ENCODE measurements at regions of chr9 and their contacts with region 1.

Region 1: DNA sequence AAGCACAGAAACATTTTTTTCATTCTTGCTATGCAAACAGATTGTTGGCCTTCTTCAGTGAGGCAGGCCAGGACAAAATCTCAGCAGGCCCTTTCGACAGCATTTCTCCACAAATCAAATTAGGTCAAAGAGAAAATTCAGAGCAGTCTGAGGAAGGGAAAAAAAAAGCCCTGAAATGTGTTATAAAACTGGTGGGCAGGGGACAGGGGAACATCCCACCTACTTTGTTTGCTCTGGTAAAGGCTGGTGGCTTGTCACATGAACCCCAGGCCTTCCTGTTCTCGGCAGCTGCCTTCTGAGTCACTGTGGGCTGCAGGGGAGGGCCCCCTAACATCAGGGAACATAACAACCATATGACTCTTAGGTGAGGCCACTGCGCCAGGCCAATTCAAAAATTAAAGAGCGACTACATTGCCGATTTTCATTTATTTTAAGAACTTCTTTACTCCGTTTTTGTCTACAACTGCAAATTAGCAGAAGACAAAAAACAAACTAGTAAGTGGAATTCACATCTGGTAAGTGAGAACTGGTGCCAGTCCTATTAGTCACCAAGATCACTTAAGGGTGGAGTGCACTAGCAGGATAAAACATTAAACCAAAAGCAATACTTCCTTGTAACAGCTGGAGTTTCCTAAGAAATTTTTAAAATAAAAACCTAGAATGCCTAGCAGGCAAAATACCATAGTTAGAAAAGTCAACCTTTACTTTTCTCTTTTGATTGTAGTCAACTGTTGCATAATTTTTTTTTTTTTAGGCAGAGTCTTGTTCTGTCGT is 46.2 kb upstream of the DENND4C start:
- DNase-seq: peak; percentile 77
- ATAC-seq: peak; percentile 90

Region 2: GRCh38 chr9:18976709-18977531 is 207.4 kb before region 1 on chr9:
- intact Hi-C with region 1: no loop called
- DNase-seq: no peak
- ATAC-seq: no peak

Region 3: DNA sequence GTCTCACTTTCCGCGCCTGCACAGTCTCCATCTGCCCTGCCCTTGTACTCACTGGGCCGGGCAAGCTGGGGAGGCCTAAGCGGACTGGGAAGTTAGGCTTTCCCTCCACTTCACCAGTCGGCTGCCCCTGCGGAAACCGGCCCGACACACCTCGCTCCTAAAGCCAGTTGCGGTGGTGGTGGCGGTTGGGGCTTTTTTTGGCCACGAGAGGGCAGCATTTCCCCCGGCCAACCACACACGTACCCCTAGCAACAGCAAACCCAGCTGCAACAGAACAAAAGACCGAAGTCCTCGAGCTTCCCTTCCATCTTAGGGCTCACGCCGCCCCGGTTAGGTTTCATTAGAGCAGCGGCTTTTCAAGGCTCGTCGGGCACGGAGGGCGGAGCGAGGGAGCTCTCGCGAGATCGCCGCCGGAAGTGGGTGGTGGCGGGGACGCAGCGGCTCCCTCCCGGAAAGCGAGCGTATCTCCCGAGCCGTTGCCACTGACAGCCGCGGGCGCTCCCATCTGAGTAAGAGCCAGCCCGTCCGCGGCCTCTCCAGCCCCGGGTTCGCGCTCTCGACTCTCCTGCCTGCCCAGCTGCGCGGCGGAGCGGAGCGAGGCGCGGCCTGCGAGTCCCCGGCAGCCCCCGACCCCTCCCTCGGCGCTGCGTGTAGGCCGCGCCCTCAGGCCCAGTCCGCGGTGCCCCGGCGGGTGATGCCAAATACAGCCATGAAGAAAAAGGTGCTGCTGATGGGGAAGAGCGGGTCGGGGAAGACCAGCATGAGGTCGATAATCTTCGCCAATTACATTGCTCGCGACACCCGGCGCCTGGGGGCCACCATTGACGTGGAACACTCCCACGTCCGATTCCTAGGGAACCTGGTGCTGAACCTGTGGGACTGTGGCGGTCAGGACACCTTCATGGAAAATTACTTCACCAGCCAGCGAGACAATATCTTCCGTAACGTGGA is 135.1 kb before region 1 on chr9 and contains the start of gene RRAGA:
- intact Hi-C with region 1: loop called (anchors 5 kb)
- DNase-seq: peak; percentile 97
- ATAC-seq: peak; percentile 97
- total RNA-seq, gene RRAGA: 76.9 TPM

Region 4: DNA sequence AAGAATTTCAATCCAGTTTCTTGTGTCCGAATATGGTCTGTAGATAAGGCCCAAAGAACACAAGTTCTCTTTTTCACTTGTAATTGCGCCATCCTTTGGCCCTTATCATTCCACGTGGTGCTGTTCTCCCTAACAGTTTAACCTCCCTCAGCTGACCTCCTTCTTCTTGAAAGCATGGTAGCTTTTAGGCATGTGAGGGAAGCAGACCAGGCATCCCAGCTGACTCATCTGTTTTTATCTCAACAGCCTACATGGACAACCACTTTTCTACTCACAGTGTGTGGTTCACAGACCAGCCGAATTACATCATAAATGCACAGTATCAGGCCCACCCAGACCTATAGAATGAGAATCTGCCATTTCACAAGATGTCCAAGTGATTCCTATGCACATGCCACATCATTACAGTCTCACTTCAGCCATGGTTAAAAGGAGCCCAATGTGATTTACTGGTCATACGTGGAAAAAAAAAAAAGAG is 30.2 kb before region 1 on chr9:
- intact Hi-C with region 1: no loop called
- DNase-seq: no peak
- ATAC-seq: peak; percentile 93